MCF 10A (cell line): ENCODE measurements at regions of chr1 and their contacts with region 1.

Region 1: GRCh38 chr1:179251675-179252074 is 22.2 kb upstream of the ABL2 start:
- DNase-seq: peak; percentile 56
- H3K4me3 Mint-ChIP-seq: no peak overlapping the region
- H3K27ac Mint-ChIP-seq: no peak overlapping the region
- H3K4me1 Mint-ChIP-seq: no peaks in the 10 kb centered on the region
- H3K27me3 Mint-ChIP-seq: no peaks in the 10 kb centered on the region
- CTCF ChIP-seq: peak; percentile 73

Region 2: GRCh38 chr1:179016747-179017549 is 234.7 kb before region 1 on chr1:
- CTCF ChIA-PET with region 1: no interaction called
- POLR2A ChIA-PET with region 1: no interaction called
- intact Hi-C with region 1: no loop called
- DNase-seq: peak; percentile 99
- H3K4me3 Mint-ChIP-seq: peak overlapping the region; percentile 26
- H3K27ac Mint-ChIP-seq: peak overlapping the region; percentile 54
- H3K4me1 Mint-ChIP-seq: peaks cover 29% of the 10 kb centered on the region
- H3K27me3 Mint-ChIP-seq: no peaks in the 10 kb centered on the region
- CTCF ChIP-seq: no peak

Region 3: GRCh38 chr1:179146911-179147310 is 104.8 kb before region 1 on chr1:
- CTCF ChIA-PET with region 1: no interaction called
- POLR2A ChIA-PET with region 1: no interaction called
- intact Hi-C with region 1: no loop called
- DNase-seq: no peak
- H3K4me3 Mint-ChIP-seq: no peak overlapping the region
- H3K27ac Mint-ChIP-seq: peak overlapping the region; percentile 68
- H3K4me1 Mint-ChIP-seq: peaks cover 14% of the 10 kb centered on the region
- H3K27me3 Mint-ChIP-seq: no peaks in the 10 kb centered on the region
- CTCF ChIP-seq: no peak

Region 4: GRCh38 chr1:179237222-179237621 is 14.5 kb before region 1 on chr1:
- CTCF ChIA-PET with region 1: interaction called, 13 read pairs
- POLR2A ChIA-PET with region 1: interaction called, 3 read pairs
- intact Hi-C with region 1: no loop called
- DNase-seq: no peak
- H3K4me3 Mint-ChIP-seq: no peak overlapping the region
- H3K27ac Mint-ChIP-seq: no peak overlapping the region
- H3K4me1 Mint-ChIP-seq: peaks cover 9% of the 10 kb centered on the region
- H3K27me3 Mint-ChIP-seq: no peaks in the 10 kb centered on the region
- CTCF ChIP-seq: no peak

Region 5: GRCh38 chr1:179293340-179294327 is 42.0 kb after region 1 on chr1 and contains the start of gene SOAT1:
- CTCF ChIA-PET with region 1: interaction called, 19 read pairs
- POLR2A ChIA-PET with region 1: no interaction called
- intact Hi-C with region 1: loop called (anchors 1 kb)
- DNase-seq: peak; percentile 90
- H3K4me3 Mint-ChIP-seq: peak within 1 kb of the TSS; percentile 78
- H3K27ac Mint-ChIP-seq: peak within 1 kb of the TSS; percentile 68
- H3K4me1 Mint-ChIP-seq: peaks cover 29% of the 10 kb centered on the region
- H3K27me3 Mint-ChIP-seq: no peaks in the 10 kb centered on the region
- CTCF ChIP-seq: peak; percentile 16
- total RNA-seq, gene SOAT1: 28.4 and 39.7 TPM in 2 replicates

Region 6: DNA sequence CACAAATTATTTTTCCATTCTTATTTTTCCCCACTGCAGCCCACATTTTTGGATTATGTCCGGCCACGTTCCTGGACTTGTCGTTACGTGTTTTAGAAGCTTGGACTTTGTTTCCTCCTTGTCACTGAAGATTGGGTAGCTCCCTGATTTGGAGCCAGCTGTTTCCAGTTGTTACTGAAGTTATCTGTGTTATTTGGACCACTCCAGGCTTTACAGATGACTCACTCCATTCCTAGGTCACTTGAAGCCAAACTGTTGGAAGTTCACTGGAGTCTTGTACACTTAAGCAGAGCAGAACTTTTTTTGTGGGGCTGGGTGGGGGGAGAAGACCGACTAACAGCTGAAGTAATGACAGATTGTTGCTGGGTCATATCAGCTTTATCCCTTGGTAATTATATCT is 101.9 kb after region 1 on chr1:
- CTCF ChIA-PET with region 1: interaction called, 17 read pairs
- POLR2A ChIA-PET with region 1: no interaction called
- intact Hi-C with region 1: no loop called
- DNase-seq: no peak
- H3K4me3 Mint-ChIP-seq: no peak overlapping the region
- H3K27ac Mint-ChIP-seq: no peak overlapping the region
- H3K4me1 Mint-ChIP-seq: no peaks in the 10 kb centered on the region
- H3K27me3 Mint-ChIP-seq: no peaks in the 10 kb centered on the region
- CTCF ChIP-seq: no peak

Region 7: DNA sequence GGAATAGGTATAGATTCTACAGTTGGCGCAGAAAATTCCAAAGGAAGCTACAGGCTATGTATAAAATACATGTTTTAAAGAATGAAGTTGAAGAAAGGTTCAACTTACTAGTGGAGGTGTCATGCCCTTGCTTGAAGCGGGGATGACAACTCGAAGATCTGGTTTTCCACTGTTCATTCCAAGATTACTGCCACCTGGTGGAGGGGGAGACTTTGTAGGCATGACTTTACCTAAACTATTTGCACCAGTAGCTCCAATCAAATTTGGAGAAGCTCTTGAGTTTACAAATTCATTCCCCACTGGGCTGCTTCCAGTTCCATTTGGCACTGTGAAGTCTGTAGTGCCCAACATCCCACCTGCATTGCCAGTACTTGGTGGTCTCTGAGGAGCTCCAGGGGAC is 195.8 kb after region 1 on chr1:
- CTCF ChIA-PET with region 1: interaction called, 4 read pairs
- POLR2A ChIA-PET with region 1: no interaction called
- intact Hi-C with region 1: loop called (anchors 5 kb)
- DNase-seq: peak; percentile 39
- H3K4me3 Mint-ChIP-seq: no peak overlapping the region
- H3K27ac Mint-ChIP-seq: no peak overlapping the region
- H3K4me1 Mint-ChIP-seq: no peaks in the 10 kb centered on the region
- H3K27me3 Mint-ChIP-seq: no peaks in the 10 kb centered on the region
- CTCF ChIP-seq: peak; percentile 25

Region 8: DNA sequence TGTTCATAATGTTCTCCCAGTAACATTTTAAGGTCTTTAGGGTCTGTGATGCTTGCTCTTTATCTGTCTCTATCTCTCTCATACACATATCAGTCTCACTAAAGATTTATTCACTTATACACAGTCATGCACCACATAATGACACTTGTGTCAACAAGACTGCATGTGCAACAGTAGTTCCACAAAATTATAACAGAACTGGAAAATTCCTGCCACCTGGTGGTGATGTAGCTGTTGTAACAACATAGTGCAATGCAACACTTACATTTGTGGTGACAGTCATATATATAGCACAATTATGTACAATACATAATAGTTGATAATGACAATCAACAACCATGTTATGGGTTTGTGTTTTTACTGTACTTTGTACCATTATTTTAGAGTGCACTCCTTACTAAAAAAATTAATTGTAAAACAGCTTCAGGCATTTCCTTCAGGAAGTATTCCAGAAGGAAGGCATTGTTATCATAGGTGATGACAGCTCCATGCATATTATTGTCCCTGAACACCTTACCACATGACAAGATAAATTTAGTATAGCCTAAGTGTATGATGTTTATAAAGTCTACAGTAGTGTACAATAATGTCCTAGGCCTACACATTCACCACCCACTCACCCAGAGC is 348.1 kb after region 1 on chr1:
- CTCF ChIA-PET with region 1: interaction called, 13 read pairs
- POLR2A ChIA-PET with region 1: no interaction called
- intact Hi-C with region 1: loop called (anchors 1 kb)
- DNase-seq: peak; percentile 73
- H3K4me3 Mint-ChIP-seq: no peak overlapping the region
- H3K27ac Mint-ChIP-seq: no peak overlapping the region
- H3K4me1 Mint-ChIP-seq: no peaks in the 10 kb centered on the region
- H3K27me3 Mint-ChIP-seq: peaks cover 69% of the 10 kb centered on the region
- CTCF ChIP-seq: peak; percentile 52